ENCODE measurements at regions of chr6 and their contacts with region 1.

Region 1: GRCh38 chr6:42217519-42218367 is at the start of gene MRPS10:
- DNase-seq: peak; percentile 83
- H3K4me3 ChIP-seq: peak within 1 kb of the TSS; percentile 95
- H3K27ac ChIP-seq: peak within 1 kb of the TSS; percentile 86
- H3K27me3 ChIP-seq: no peaks in the 10 kb centered on the region
- CTCF ChIP-seq: no peak
- polyA plus RNA-seq, gene MRPS10: 45.4 and 63.2 TPM in 2 replicates

Region 2: GRCh38 chr6:42075159-42075838 is 142.4 kb before region 1 on chr6:
- CTCF ChIA-PET with region 1: interaction called, 172 read pairs
- POLR2A ChIA-PET with region 1: interaction called, 5 read pairs
- DNase-seq: peak; percentile 37
- H3K4me3 ChIP-seq: no peak overlapping the region
- H3K27ac ChIP-seq: no peak overlapping the region
- H3K27me3 ChIP-seq: no peaks in the 10 kb centered on the region
- CTCF ChIP-seq: peak; percentile 94

Region 3: DNA sequence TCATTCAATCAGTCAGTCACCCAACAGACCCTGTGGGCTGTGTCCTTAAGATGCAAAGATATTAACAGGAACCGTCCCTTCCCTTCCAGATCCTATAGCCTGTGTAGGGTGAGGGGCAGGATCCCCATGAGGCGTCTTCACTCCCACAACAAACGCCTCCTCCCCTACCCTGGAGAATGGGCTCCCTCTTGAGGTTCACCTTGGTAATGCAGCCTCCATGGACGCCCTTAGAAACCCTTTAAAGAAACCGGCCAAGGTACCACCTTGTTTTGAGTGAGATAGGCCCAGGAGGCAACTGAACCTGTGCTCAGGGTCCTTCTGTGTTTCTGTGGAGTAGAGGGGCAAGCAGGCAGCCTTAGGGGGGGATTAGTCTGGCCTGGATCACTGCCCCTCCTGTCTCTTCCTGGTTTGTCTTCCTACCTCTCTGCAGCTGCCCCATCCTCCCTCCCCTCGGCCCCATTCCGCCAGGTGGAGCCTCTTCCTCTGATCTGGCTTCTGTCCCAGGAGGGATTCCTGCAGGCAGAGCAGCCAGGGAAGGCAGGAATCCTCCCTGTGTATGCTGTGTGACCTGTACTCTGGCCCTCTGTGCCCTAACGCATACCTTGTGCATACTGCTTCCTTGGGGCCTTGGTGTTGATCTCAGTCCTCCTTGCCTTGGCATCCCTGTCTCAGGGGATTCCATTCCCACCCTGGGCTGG is 51.1 kb before region 1 on chr6:
- CTCF ChIA-PET with region 1: interaction called, 48 read pairs
- POLR2A ChIA-PET with region 1: interaction called, 3 read pairs
- DNase-seq: peak; percentile 44
- H3K4me3 ChIP-seq: no peak overlapping the region
- H3K27ac ChIP-seq: no peak overlapping the region
- H3K27me3 ChIP-seq: peaks cover 3% of the 10 kb centered on the region
- CTCF ChIP-seq: peak; percentile 98

Region 4: GRCh38 chr6:42200035-42200434 is 17.7 kb before region 1 on chr6:
- CTCF ChIA-PET with region 1: interaction called, 58 read pairs
- POLR2A ChIA-PET with region 1: interaction called, 11 read pairs
- DNase-seq: peak; percentile 96
- H3K4me3 ChIP-seq: no peak overlapping the region
- H3K27ac ChIP-seq: peak overlapping the region; percentile 81
- H3K27me3 ChIP-seq: no peaks in the 10 kb centered on the region
- CTCF ChIP-seq: no peak

Measured in AG04450 (cell line).